B cell (primary cell): ENCODE measurements at regions of chr2 and their contacts with region 1.

Region 1: GRCh38 chr2:75403991-75404428 is 156.7 kb downstream of the EVA1A start:
- DNase-seq: peak; percentile 65
- ATAC-seq: peak; percentile 83
- H3K4me3 ChIP-seq: no peak overlapping the region
- H3K4me3 Mint-ChIP-seq: no peak overlapping the region
- H3K27ac ChIP-seq: no peak overlapping the region
- H3K27ac Mint-ChIP-seq: no peak overlapping the region
- H3K4me1 ChIP-seq: no peaks in the 10 kb centered on the region
- H3K4me1 Mint-ChIP-seq: peaks cover 19% of the 10 kb centered on the region
- H3K27me3 ChIP-seq: no peaks in the 10 kb centered on the region
- H3K27me3 Mint-ChIP-seq: no peaks in the 10 kb centered on the region
- CTCF ChIP-seq: peak; percentile 95

Region 2: GRCh38 chr2:74690571-74690970 is 713.4 kb before region 1 on chr2:
- CTCF ChIA-PET with region 1: no interaction called
- POLR2A ChIA-PET with region 1: no interaction called
- intact Hi-C with region 1: loop called (anchors 5 kb)
- DNase-seq: peak; percentile 61
- ATAC-seq: peak; percentile 49
- H3K4me3 ChIP-seq: no peak overlapping the region
- H3K4me3 Mint-ChIP-seq: no peak overlapping the region
- H3K27ac ChIP-seq: no peak overlapping the region
- H3K27ac Mint-ChIP-seq: no peak overlapping the region
- H3K4me1 ChIP-seq: no peaks in the 10 kb centered on the region
- H3K4me1 Mint-ChIP-seq: no peaks in the 10 kb centered on the region
- H3K27me3 ChIP-seq: no peaks in the 10 kb centered on the region
- H3K27me3 Mint-ChIP-seq: peaks cover 12% of the 10 kb centered on the region
- CTCF ChIP-seq: peak; percentile 74

Region 3: DNA sequence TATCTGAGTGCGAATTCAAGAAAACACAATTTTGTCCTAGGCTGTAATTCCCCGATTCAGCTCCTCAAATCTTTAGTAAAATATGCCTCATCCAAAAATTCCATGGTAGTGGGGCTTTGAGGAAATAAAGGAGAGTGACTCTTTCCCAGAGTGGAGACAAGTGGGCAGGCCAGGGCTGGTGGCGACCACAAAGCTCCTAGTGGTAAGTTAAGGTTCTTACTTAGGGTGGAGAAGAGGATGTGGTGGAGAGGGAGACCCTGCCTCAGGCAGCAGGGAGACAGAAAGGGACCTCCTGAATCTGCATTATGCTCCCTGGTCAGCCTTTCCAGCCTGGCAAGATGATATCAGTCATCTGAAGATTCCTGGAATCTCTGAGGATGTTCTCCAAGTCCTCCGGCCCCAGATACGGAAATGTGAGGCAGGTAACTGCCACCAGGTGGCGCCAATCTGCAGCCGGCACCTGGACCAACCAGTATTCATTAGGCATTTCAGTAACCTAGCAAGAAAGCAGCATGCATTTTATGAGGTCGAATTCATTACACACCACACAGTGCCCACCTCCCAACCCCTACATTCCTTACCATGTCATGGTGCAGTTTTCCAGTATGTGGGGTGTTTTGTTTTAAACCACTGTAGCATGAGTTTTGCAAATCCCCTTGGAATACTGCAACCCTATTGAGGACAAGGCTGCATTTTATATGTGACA is 339.2 kb before region 1 on chr2:
- CTCF ChIA-PET with region 1: interaction called, 21 read pairs
- POLR2A ChIA-PET with region 1: no interaction called
- intact Hi-C with region 1: loop called (anchors 1 kb)
- DNase-seq: peak; percentile 65
- ATAC-seq: peak; percentile 62
- H3K4me3 ChIP-seq: no peak overlapping the region
- H3K4me3 Mint-ChIP-seq: no peak overlapping the region
- H3K27ac ChIP-seq: no peak overlapping the region
- H3K27ac Mint-ChIP-seq: no peak overlapping the region
- H3K4me1 ChIP-seq: no peaks in the 10 kb centered on the region
- H3K4me1 Mint-ChIP-seq: no peaks in the 10 kb centered on the region
- H3K27me3 ChIP-seq: no peaks in the 10 kb centered on the region
- H3K27me3 Mint-ChIP-seq: no peaks in the 10 kb centered on the region
- CTCF ChIP-seq: peak; percentile 95

Region 4: GRCh38 chr2:75311993-75312392 is 92.0 kb before region 1 on chr2:
- CTCF ChIA-PET with region 1: no interaction called
- POLR2A ChIA-PET with region 1: no interaction called
- intact Hi-C with region 1: loop called (anchors 1 kb)
- DNase-seq: peak; percentile 69
- ATAC-seq: peak; percentile 100
- H3K4me3 ChIP-seq: no peak overlapping the region
- H3K4me3 Mint-ChIP-seq: peak overlapping the region; percentile 8
- H3K27ac ChIP-seq: no peak overlapping the region
- H3K27ac Mint-ChIP-seq: no peak overlapping the region
- H3K4me1 ChIP-seq: peaks cover 12% of the 10 kb centered on the region in 2 donors
- H3K4me1 Mint-ChIP-seq: peaks cover 17% of the 10 kb centered on the region
- H3K27me3 ChIP-seq: no peaks in the 10 kb centered on the region
- H3K27me3 Mint-ChIP-seq: no peaks in the 10 kb centered on the region
- CTCF ChIP-seq: peak; percentile 55

Region 5: GRCh38 chr2:75340560-75341330 is 63.3 kb before region 1 on chr2:
- CTCF ChIA-PET with region 1: no interaction called
- POLR2A ChIA-PET with region 1: no interaction called
- intact Hi-C with region 1: no loop called
- DNase-seq: no peak
- ATAC-seq: no peak
- H3K4me3 ChIP-seq: no peak overlapping the region
- H3K4me3 Mint-ChIP-seq: no peak overlapping the region
- H3K27ac ChIP-seq: no peak overlapping the region
- H3K27ac Mint-ChIP-seq: no peak overlapping the region
- H3K4me1 ChIP-seq: no peaks in the 10 kb centered on the region
- H3K4me1 Mint-ChIP-seq: peaks cover 19% of the 10 kb centered on the region
- H3K27me3 ChIP-seq: no peaks in the 10 kb centered on the region
- H3K27me3 Mint-ChIP-seq: no peaks in the 10 kb centered on the region
- CTCF ChIP-seq: no peak

Region 6: DNA sequence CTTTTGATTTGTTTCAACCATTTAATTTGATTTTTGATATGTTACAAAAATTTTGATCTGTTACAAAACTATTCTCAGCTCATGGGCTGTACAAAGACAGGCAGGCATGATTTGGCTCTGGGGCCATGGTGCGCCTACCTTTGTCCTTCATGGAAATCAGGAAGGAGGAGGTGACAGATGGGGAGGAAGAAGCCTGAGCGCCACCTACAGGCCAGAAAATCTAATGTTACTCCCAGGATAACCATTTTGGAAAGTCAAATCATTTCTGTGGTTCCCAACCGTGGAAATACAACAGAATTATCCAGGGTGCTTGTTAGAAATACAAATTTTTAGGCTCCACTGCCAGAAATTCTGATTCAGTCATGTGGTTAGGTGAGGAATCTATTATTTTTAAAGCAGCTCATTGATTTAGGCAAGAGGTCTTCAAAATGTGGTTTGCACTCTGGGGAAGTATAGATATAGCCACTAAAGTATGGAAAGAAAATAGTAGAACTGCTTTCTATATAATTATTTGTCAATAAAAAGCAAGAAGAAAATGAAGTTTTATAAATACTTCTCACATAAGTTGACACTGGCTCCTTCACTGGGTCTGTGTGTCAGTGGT is 62.8 kb after region 1 on chr2:
- CTCF ChIA-PET with region 1: interaction called, 31 read pairs
- POLR2A ChIA-PET with region 1: no interaction called
- intact Hi-C with region 1: loop called (anchors 1 kb)
- DNase-seq: peak; percentile 49
- ATAC-seq: no peak
- H3K4me3 ChIP-seq: no peak overlapping the region
- H3K4me3 Mint-ChIP-seq: no peak overlapping the region
- H3K27ac ChIP-seq: no peak overlapping the region
- H3K27ac Mint-ChIP-seq: no peak overlapping the region
- H3K4me1 ChIP-seq: no peaks in the 10 kb centered on the region
- H3K4me1 Mint-ChIP-seq: peaks cover 1% of the 10 kb centered on the region
- H3K27me3 ChIP-seq: peaks cover 0 to 11% (median under 1%) of the 10 kb centered on the region in 4 experiments
- H3K27me3 Mint-ChIP-seq: peaks cover 20% of the 10 kb centered on the region
- CTCF ChIP-seq: peak; percentile 79